GM12878 (cell line): ENCODE measurements at regions of chr1 and their contacts with region 1.

Region 1: GRCh38 chr1:184222652-184223052 is 164.2 kb upstream of the C1orf21 start:
- DNase-seq: peak; percentile 11
- ATAC-seq: peak; percentile 59
- H3K4me3 ChIP-seq: no peak overlapping the region
- H3K27ac ChIP-seq: no peak overlapping the region
- H3K4me1 ChIP-seq: no peaks in the 10 kb centered on the region
- H3K27me3 ChIP-seq: peaks cover 0 to 5% of the 10 kb centered on the region in 2 experiments; a peak in 1 of 4 replicates
- CTCF ChIP-seq: peak; percentile 86 to 96 (median 93)
- EP300 ChIP-seq: no peak
- POLR2A ChIP-seq: no peak
- RAD21 ChIP-seq: peak; percentile 90

Region 2: GRCh38 chr1:183776731-183777130 is 445.9 kb before region 1 on chr1:
- CTCF ChIA-PET with region 1: no interaction called
- POLR2A ChIA-PET with region 1: no interaction called
- RAD21 ChIA-PET with region 1: no interaction called
- SMC1A ChIA-PET with region 1: no interaction called
- in situ Hi-C with region 1: no loop called
- intact Hi-C with region 1: no loop called
- DNase-seq: no peak
- ATAC-seq: no peak
- H3K4me3 ChIP-seq: no peak overlapping the region
- H3K27ac ChIP-seq: no peak overlapping the region
- H3K4me1 ChIP-seq: no peaks in the 10 kb centered on the region
- H3K27me3 ChIP-seq: no peaks in the 10 kb centered on the region
- CTCF ChIP-seq: no peak
- EP300 ChIP-seq: no peak
- POLR2A ChIP-seq: no peak
- RAD21 ChIP-seq: no peak

Region 3: DNA sequence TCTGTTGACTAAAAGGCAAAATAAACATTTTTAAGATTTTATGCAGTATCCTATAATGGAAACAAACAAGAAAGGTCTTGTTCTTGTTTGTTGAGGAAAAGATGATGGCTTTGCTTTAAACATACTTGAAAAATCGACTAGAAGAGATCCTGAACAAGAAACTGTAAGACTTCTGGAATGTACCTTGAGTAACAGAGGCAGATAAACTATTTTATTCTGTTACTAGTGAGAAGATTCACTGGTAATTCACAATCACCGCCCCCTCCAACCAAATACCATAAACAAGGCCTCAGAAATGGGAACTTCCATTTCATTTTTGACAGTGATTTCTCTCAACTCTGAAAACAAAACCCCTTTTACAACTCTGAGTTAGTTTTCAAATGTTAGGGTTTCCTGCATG is 153.0 kb before region 1 on chr1:
- CTCF ChIA-PET with region 1: interaction called, 82 read pairs
- POLR2A ChIA-PET with region 1: no interaction called
- RAD21 ChIA-PET with region 1: interaction called, 22 read pairs
- SMC1A ChIA-PET with region 1: interaction called, 57 read pairs
- in situ Hi-C with region 1: no loop called
- intact Hi-C with region 1: no loop called
- DNase-seq: no peak
- ATAC-seq: no peak
- H3K4me3 ChIP-seq: no peak overlapping the region
- H3K27ac ChIP-seq: no peak overlapping the region
- H3K4me1 ChIP-seq: no peaks in the 10 kb centered on the region
- H3K27me3 ChIP-seq: no peaks in the 10 kb centered on the region
- CTCF ChIP-seq: no peak
- EP300 ChIP-seq: no peak
- POLR2A ChIP-seq: no peak
- RAD21 ChIP-seq: no peak

Region 4: GRCh38 chr1:184075055-184076029 is 147.3 kb before region 1 on chr1:
- CTCF ChIA-PET with region 1: interaction called, 82 read pairs
- POLR2A ChIA-PET with region 1: no interaction called
- RAD21 ChIA-PET with region 1: interaction called, 22 read pairs
- SMC1A ChIA-PET with region 1: interaction called, 57 read pairs
- in situ Hi-C with region 1: loop called (anchors 5 kb)
- intact Hi-C with region 1: loop called (anchors 1 kb)
- DNase-seq: no peak
- ATAC-seq: peak; percentile 91
- H3K4me3 ChIP-seq: no peak overlapping the region
- H3K27ac ChIP-seq: no peak overlapping the region
- H3K4me1 ChIP-seq: no peaks in the 10 kb centered on the region
- H3K27me3 ChIP-seq: no peaks in the 10 kb centered on the region
- CTCF ChIP-seq: peak; percentile 52 to 74 (median 62)
- EP300 ChIP-seq: 0 out of 4 replicates have a peak, but pooled peaks of 1 of the 2 experiments have one; percentile 12
- POLR2A ChIP-seq: no peak
- RAD21 ChIP-seq: peak; percentile 96

Region 5: GRCh38 chr1:184082541-184083415 is 139.9 kb before region 1 on chr1:
- CTCF ChIA-PET with region 1: interaction called, 82 read pairs
- POLR2A ChIA-PET with region 1: no interaction called
- RAD21 ChIA-PET with region 1: interaction called, 4 read pairs
- SMC1A ChIA-PET with region 1: interaction called, 57 read pairs
- in situ Hi-C with region 1: loop called (anchors 5 kb)
- intact Hi-C with region 1: no loop called
- DNase-seq: no peak
- ATAC-seq: no peak
- H3K4me3 ChIP-seq: no peak overlapping the region
- H3K27ac ChIP-seq: no peak overlapping the region
- H3K4me1 ChIP-seq: no peaks in the 10 kb centered on the region
- H3K27me3 ChIP-seq: no peaks in the 10 kb centered on the region
- CTCF ChIP-seq: no peak
- EP300 ChIP-seq: no peak
- POLR2A ChIP-seq: no peak
- RAD21 ChIP-seq: no peak

Region 6: DNA sequence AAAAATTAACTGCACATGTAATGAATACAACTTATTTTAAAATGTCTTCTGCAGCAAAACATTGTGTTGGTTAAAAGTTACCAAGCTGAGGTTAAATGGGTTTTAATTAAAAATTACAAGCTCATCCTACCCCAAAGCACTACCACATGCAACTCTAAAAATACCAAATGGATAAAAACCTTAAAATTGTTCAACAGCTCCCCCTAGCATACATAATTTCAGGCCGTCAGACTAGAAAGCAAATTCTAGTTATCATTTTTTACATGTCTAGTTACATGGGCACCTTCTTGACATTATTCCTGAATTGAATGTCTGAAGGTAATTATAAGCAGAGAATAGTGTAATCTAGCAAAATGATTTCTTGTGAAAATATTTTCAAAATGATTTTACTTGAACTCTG is 340.7 kb after region 1 on chr1:
- CTCF ChIA-PET with region 1: no interaction called
- POLR2A ChIA-PET with region 1: no interaction called
- RAD21 ChIA-PET with region 1: interaction called, 3 read pairs
- SMC1A ChIA-PET with region 1: interaction called, 6 read pairs
- in situ Hi-C with region 1: no loop called
- intact Hi-C with region 1: loop called (anchors 5 kb)
- DNase-seq: no peak
- ATAC-seq: no peak; the same call in 2 of the 3 replicates
- H3K4me3 ChIP-seq: no peak overlapping the region
- H3K27ac ChIP-seq: no peak overlapping the region
- H3K4me1 ChIP-seq: peaks cover 5% of the 10 kb centered on the region; the same call in 1 of the 2 replicates
- H3K27me3 ChIP-seq: no peaks in the 10 kb centered on the region; a peak in 2 of 4 replicates
- CTCF ChIP-seq: peak; percentile 26 to 54 (median 35); a peak in 4 of 6 replicates
- EP300 ChIP-seq: no peak
- POLR2A ChIP-seq: no peak
- RAD21 ChIP-seq: peak; percentile 61

Region 7: GRCh38 chr1:184822267-184822666 is 599.6 kb after region 1 on chr1:
- CTCF ChIA-PET with region 1: no interaction called
- POLR2A ChIA-PET with region 1: no interaction called
- RAD21 ChIA-PET with region 1: no interaction called
- SMC1A ChIA-PET with region 1: no interaction called
- in situ Hi-C with region 1: no loop called
- intact Hi-C with region 1: no loop called
- DNase-seq: no peak
- ATAC-seq: no peak
- H3K4me3 ChIP-seq: no peak overlapping the region
- H3K27ac ChIP-seq: no peak overlapping the region
- H3K4me1 ChIP-seq: peaks cover 20% of the 10 kb centered on the region
- H3K27me3 ChIP-seq: no peaks in the 10 kb centered on the region
- CTCF ChIP-seq: no peak
- EP300 ChIP-seq: no peak
- POLR2A ChIP-seq: no peak
- RAD21 ChIP-seq: no peak